ENCODE measurements at regions of chr12 and their contacts with region 1.

Region 1: DNA sequence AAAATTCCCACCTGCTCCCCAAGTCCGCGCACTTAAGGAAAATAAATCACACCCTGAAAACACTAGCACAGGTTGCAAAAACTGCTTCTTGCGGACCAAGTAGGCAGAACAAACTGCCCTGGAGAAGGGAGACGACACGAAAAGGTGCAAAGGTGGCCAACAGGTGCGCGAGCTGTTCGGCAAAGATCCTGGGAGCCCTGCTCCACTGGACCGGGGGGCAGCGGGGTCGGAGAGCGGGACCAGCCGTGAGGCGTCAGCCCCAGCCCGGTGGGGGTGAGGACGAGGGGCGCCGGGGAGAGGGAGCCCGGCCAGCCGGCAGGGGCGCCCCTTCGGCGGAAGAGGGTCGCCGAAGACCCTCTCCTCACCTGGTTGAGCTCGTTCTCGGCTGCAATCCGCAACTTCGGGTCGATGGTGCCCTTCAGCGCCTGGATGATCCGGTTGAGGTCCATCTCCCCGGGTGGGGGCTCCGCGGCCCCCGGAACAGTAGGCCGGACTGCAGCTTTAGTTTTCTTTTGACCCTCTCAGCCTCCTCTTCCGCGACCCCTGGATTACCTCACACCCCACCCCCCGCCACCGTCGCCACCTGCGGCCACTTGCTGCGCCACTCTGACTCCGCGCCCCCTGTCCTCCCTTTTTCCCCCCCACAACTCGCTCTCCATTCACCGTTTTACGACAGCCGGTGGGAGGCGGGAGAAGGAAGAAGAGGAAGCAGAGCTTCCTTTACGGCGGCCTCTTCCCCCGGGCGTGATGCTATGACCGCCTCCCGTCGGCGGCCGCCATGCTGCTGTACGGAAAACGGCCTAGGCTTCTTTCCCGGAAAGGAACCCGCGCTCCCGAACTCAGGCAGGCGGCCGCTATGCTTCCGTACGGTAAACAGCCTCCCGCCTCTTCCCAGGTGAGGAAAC is at the start of gene IPO8:
- DNase-seq: peak; percentile 89
- H3K4me3 ChIP-seq: peak within 1 kb of the TSS; percentile 52 to 96 (median 78)
- H3K27ac ChIP-seq: peak within 1 kb of the TSS; percentile 26
- H3K4me1 ChIP-seq: peaks cover 20% of the 10 kb centered on the region
- H3K27me3 ChIP-seq: no peaks in the 10 kb centered on the region
- CTCF ChIP-seq: peak; percentile 20 to 59
- POLR2A ChIP-seq: peak; percentile 33
- total RNA-seq, gene IPO8: 44.7 and 52.5 TPM in 2 replicates

Region 2: DNA sequence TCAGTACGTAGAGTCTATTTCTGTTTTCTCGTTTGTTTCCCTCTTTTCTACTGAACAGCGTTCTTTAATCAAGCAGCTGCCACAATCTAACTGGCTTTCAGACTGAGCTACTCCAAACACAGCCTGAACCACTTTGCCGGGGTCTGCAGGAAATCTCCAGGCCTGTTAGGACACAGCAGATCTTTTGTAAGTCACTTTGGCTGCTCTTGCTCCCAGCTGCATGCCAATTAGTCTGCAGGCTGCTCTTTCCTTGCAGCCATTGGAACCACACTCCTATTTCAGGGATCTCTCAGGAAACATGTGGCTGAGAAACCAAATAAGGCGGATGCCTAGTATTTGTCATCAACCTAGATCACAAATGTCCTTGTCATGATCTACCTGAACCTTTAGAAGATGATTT is 985.3 kb before region 1 on chr12:
- CTCF ChIA-PET with region 1: no interaction called
- POLR2A ChIA-PET with region 1: no interaction called
- dilution Hi-C with region 1: no loop called
- intact Hi-C with region 1: no loop called
- DNase-seq: no peak
- H3K4me3 ChIP-seq: no peak overlapping the region
- H3K27ac ChIP-seq: no peak overlapping the region
- H3K4me1 ChIP-seq: no peaks in the 10 kb centered on the region
- H3K27me3 ChIP-seq: no peaks in the 10 kb centered on the region
- CTCF ChIP-seq: no peak
- POLR2A ChIP-seq: no peak

Region 3: DNA sequence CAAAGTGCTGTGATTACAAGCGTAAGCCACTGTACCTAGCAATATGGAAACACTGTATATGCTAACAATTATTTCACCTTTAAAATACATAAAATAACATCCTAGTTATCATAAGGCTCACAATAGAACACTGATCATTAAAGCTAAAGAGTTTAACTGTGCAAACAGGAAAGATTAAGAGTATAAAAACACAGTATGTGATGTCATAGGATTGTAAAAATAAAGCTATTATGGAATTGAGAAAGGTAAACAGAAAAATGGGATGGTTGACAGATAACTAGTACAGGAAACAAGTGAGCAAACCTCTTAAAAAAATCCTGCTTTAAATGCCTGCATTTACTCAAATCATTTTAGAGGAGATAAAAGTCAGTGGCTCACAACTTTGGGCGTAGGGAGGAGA is 11.0 kb after region 1 on chr12:
- CTCF ChIA-PET with region 1: interaction called, 10 read pairs
- POLR2A ChIA-PET with region 1: no interaction called
- dilution Hi-C with region 1: no loop called
- intact Hi-C with region 1: no loop called
- DNase-seq: peak; percentile 48
- H3K4me3 ChIP-seq: no peak overlapping the region
- H3K27ac ChIP-seq: no peak overlapping the region
- H3K4me1 ChIP-seq: peaks cover 12% of the 10 kb centered on the region
- H3K27me3 ChIP-seq: no peaks in the 10 kb centered on the region
- CTCF ChIP-seq: no peak
- POLR2A ChIP-seq: no peak